ENCODE measurements at regions of chr20 and their contacts with region 1.

Region 1: DNA sequence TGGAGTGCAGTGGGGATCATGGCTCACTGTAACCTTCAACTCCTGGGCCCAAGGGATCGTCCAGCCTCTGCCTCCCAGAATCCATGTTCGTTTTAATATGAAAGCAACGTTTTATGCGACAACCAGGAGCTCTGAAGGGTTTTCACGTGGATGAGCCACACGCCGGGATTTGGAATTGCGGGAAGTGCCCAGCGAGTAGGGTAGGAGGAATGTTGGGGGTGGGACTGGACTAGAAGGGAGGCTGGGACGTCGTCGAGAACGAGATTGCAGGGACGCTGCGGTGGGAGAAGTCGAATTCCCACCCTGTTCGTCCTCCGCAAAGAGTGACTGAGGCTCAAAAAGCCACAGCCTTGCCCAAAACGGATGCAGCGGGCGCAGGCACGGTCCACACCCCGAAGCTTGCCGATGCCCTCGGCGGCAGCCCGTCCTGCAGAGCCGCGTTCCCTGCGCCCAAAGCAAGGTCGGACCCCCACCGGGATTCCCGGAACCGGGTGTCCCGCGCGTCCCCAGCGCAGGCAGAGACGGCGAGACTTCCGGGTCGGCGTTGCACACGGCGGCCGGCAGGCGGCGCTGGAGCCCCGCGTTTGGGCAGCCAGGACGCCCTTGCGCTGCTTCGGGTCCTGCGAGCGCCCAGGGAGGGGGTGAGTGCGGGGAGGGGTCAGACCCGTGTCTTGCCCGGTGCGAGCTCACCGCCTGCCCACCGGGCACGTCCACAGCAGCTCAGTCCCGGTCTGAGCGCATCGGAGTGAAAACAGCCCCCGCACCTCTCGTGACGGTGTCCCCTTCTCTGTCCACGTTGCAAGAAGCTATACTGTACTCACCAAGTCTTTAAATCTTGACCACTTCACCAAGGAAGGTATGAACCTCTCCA is 87.8 kb downstream of the DHX35 start:
- DNase-seq: peak; percentile 83

Region 2: GRCh38 chr20:39066471-39067242 is 16.7 kb after region 1 on chr20:
- CTCF ChIA-PET with region 1: interaction called, 11 read pairs
- POLR2A ChIA-PET with region 1: interaction called, 3 read pairs
- DNase-seq: peak; percentile 40

Region 3: DNA sequence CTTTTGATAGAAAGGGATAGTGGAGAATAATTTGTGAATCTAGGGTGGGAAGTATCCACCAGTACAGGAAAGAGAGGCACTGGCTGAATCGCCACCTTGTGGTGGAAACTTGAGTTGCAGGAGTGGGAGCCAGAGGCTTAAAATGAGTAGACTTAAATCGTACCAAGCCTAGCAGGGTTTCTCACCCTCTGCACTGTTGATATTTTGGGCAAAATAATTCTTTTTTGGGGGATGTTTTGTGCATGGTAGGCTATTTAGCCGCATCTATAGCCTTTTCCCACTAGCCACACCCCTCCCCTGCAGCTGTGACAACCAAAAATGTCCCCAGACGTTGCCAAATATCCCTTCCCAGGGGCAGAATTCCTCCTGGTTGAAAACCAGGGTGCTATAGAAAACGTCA is 31.3 kb after region 1 on chr20:
- CTCF ChIA-PET with region 1: interaction called, 12 read pairs
- POLR2A ChIA-PET with region 1: interaction called, 5 read pairs
- DNase-seq: peak; percentile 79

Measured in HEK293T (cell line).